Left lung (tissue), 14 donors: ENCODE measurements at regions of chr21 and their contacts with region 1.

Region 1: GRCh38 chr21:28737674-28738419 is 254.8 kb downstream of the LTN1 start:
- DNase-seq: no peak
- ATAC-seq: no peak
- H3K4me3 ChIP-seq: no peak overlapping the region
- H3K27ac ChIP-seq: no peak overlapping the region
- H3K4me1 ChIP-seq: no peaks in the 10 kb centered on the region
- H3K27me3 ChIP-seq: no peaks in the 10 kb centered on the region
- CTCF ChIP-seq: no peak

Region 2: DNA sequence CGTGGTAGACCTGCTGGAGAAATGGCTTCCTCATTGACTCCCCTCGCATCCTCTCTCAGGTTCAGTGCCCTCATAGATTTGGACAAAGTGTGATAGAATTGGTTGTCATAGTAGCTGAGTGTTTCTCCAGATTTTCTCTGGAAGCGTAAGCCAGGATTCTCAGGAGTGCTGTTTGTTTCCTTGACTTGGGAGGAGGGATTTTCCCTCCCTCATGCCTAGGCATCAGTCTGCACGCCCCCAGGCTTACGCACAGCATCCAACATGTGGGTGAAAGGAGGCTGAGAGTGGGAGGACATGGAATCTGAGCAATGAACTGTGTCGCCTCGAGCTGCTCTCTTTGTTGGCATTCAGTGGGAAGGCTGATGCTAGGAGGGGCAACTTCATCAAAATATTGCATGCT is 248.7 kb before region 1 on chr21:
- intact Hi-C with region 1: no loop called
- DNase-seq: no peak
- ATAC-seq: no peak
- H3K4me3 ChIP-seq: no peak overlapping the region
- H3K27ac ChIP-seq: no peak overlapping the region
- H3K4me1 ChIP-seq: no peaks in the 10 kb centered on the region
- H3K27me3 ChIP-seq: no peaks in the 10 kb centered on the region
- CTCF ChIP-seq: no peak

Region 3: DNA sequence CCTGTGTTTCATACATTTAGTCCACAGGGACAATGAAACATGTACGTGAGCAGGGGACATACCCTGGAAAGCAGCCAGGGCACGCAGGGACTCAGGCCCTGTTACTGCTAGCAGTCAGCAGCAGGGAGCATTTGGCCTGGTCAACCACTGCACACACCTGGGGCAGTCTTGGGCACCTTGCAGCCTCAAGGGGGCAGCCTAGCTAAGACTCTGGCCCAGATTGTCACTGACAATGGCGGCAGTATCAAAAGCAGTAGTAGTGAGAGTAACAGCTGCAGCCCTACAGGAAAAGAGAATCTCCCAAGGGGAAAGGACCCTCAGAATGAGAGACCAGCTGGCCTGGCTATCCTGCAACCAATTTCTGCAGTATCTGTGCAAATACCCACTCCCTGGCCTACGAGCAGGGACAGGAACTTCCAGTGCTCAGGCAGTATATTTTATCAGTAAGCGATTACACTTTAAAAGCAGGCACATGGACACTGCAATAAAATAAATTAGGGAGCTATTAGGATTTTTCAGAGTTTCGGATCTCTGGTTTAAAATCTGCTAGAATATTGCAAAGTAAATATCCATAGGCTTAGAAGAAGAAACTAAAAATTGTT is 220.8 kb before region 1 on chr21:
- intact Hi-C with region 1: loop called in 1 of 2 experiments (anchors 10 kb)
- DNase-seq: peak in 3 of 4 donors; percentile 36 to 53 (median 43)
- ATAC-seq: peak; percentile 93
- H3K4me3 ChIP-seq: no peak overlapping the region
- H3K27ac ChIP-seq: no peak overlapping the region
- H3K4me1 ChIP-seq: peaks cover 0 to 2% of the 10 kb centered on the region in 2 donors
- H3K27me3 ChIP-seq: no peaks in the 10 kb centered on the region
- CTCF ChIP-seq: peak in 1 of 2 donors; percentile 49

Region 4: DNA sequence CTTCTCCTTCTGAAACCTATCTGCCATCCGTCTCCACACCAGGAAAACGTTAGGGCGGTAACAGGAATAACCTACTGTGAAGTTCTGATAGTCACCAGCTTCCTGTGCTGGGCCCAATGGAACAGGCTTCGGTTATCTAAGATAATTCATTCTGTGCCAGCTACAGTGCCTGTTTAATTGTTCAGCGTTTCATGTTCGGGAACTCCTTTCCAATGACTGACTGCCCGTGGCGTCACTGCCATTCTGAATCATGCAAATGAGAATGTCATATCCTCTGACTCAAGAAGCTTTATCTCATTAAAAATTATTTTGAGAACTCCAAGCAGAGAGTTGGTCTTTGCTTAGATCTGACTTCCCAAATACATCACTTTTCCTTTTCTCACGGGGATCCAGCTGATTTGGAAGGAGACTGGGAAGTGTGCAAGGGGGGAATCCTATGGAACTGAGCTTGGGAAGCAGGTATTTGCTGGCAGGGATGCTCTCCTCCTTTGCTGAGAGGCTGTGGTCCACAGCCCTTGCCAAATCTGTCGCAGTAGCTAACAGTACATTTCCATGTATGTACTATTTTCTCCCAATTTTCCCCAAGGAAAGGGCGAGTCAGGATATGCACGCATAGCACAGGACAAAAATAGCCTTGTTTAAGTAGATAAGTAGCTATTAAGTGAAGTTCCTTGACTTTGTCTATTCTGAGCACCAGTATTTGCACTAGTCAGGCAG is 103.8 kb before region 1 on chr21:
- intact Hi-C with region 1: no loop called
- DNase-seq: no peak
- ATAC-seq: peak; percentile 49
- H3K4me3 ChIP-seq: no peak overlapping the region
- H3K27ac ChIP-seq: peak overlapping the region; percentile 2 to 31
- H3K4me1 ChIP-seq: no peaks in the 10 kb centered on the region
- H3K27me3 ChIP-seq: no peaks in the 10 kb centered on the region
- CTCF ChIP-seq: no peak

Region 5: GRCh38 chr21:28928578-28929420 is 191.0 kb after region 1 on chr21:
- intact Hi-C with region 1: no loop called
- DNase-seq: no peak
- ATAC-seq: no peak
- H3K4me3 ChIP-seq: no peak overlapping the region
- H3K27ac ChIP-seq: no peak overlapping the region
- H3K4me1 ChIP-seq: no peaks in the 10 kb centered on the region
- H3K27me3 ChIP-seq: no peaks in the 10 kb centered on the region
- CTCF ChIP-seq: no peak

Region 6: DNA sequence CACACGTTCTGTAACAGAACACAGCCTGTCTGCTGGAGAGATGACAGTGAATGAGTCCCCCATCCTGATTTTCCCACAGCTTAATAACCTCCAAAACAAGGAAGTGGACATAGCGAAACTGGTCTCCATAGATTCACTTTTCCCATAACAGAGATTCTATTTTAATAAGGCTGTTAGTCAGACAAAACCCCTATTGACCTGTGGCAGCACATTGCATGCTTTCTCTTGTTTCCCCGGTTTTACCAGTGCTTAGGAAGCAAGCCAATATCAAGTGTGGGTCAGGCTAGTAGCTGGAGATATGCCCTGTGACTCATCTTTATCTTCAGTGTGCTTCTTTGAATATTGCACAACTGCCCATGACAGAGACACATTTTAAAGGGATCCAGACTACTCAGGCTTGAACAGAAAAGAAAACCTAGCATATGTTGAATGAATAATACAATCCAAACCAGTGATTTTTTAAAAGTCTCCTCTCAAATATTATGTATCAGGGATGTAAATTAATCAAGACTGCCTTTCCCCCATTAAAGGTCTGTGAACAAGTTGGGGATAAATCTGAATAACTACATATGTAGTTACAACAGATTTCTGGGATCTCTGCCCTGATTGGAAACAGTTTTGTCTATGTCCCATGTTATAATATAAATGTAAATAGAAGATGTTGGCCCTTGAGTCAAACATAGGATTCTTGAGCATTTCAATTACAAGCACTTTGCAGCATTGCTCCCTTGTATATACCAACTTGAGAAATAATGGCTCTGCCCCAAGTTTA is 1490.0 kb after region 1 on chr21:
- intact Hi-C with region 1: no loop called
- DNase-seq: peak in 1 of 4 donors; percentile 9
- ATAC-seq: peak; percentile 84
- H3K4me3 ChIP-seq: no peak overlapping the region
- H3K27ac ChIP-seq: peak overlapping the region in 1 of 2 donors; percentile 35
- H3K4me1 ChIP-seq: peaks cover 0 to 6% of the 10 kb centered on the region in 2 donors
- H3K27me3 ChIP-seq: no peaks in the 10 kb centered on the region
- CTCF ChIP-seq: no peak